ENCODE measurements at regions of chr19 and their contacts with region 1.

Region 1: GRCh38 chr19:49017666-49018351 is 918 bp upstream of the LHB start:
- DNase-seq: peak; percentile 89
- H3K4me3 ChIP-seq: peak overlapping the region; percentile 46 to 60
- H3K27ac ChIP-seq: no peak overlapping the region
- H3K4me1 ChIP-seq: peaks cover 0 to 35% of the 10 kb centered on the region in 2 experiments; a peak in 1 of 4 replicates
- H3K27me3 ChIP-seq: no peaks in the 10 kb centered on the region
- CTCF ChIP-seq: peak; percentile 57
- EP300 ChIP-seq: no peak
- RAD21 ChIP-seq: no peak

Region 2: DNA sequence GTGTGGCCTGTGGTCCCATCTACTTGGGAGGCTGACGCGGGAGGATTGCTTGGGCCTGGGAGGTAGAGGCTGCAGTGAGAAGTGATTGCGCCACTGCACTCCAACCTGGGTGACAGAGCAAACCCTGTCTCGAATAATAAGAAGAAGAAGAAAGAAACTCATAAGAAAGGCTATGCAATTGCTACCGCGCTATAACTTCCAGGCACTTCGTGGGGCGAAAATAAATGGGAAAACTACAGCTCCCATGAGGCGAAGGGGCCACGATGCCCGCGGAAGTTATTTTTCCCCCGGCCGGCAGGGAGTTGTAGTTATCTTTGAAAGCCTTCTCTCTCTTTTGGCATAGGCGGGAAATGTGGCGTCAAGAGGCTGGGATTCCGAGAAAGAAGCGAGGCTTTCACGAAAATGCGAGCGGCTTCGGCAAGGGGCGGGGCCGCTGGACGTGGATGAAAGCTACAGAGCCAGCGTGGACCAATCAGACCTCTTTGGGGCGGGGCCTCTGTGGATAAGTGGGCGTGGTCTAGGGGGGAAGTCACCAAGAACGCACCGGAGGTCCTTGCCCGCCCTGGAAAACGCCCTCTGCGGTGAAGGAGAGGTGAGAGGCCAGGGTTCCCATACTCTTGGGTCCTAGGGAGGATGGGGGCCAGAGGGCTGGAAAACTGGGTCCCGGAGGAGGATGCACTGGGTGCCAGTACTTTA is 117.9 kb before region 1 on chr19 and contains the start of gene NUCB1:
- CTCF ChIA-PET with region 1: no interaction called
- POLR2A ChIA-PET with region 1: no interaction called
- DNase-seq: peak; percentile 98
- H3K4me3 ChIP-seq: peak within 1 kb of the TSS; percentile 85
- H3K27ac ChIP-seq: peak within 1 kb of the TSS; percentile 70 to 90
- H3K4me1 ChIP-seq: peaks cover 0 to 9% of the 10 kb centered on the region in 2 experiments; a peak in 1 of 4 replicates
- H3K27me3 ChIP-seq: no peaks in the 10 kb centered on the region
- CTCF ChIP-seq: peak; percentile 32; the same call in 1 of the 2 replicates
- EP300 ChIP-seq: peak in 1 of 2 experiments; percentile 72; a peak in 1 of 4 replicates
- RAD21 ChIP-seq: 0 out of 2 replicates have a peak, but pooled peaks have one; percentile 12
- polyA plus RNA-seq, gene NUCB1: 259 and 397 TPM in 2 replicates

Region 3: DNA sequence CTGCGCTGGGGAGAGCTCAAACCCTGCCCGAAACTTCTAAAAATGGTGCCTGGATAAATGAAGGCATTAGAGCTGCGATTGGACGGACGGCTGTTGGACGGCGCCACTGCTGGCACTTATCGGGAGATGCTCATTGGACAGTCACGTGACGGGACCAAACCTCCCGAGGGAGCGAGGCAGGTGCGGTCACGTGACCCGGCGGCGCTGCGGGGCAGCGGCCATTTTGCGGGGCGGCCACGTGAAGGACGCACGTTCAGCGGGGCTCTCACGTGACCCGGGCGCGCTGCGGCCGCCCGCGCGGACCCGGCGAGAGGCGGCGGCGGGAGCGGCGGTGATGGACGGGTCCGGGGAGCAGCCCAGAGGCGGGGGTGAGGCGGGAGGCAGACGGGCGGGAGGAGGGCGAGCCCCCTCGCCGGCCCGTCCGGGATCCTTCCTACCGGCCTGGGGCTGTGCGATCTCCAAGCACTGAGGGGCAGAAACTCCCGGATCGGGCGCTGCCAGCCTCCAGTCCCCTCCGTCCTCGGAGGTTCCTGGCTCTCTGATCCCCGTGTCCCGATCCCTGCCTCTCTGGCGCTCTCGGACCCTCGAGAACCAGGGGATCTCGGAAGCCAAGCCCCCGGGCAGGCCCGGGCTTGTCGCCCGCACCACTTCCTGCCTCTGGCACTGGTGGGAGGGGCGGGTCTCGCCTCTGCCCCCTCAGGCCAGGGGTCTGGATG is 63.1 kb before region 1 on chr19 and contains the start of gene BAX:
- CTCF ChIA-PET with region 1: no interaction called
- POLR2A ChIA-PET with region 1: no interaction called
- DNase-seq: peak; percentile 99
- H3K4me3 ChIP-seq: peak within 1 kb of the TSS; percentile 76 to 80
- H3K27ac ChIP-seq: peak within 1 kb of the TSS; percentile 83 to 86
- H3K4me1 ChIP-seq: peaks cover 8 to 10% of the 10 kb centered on the region in 2 experiments; a peak in 2 of 4 replicates
- H3K27me3 ChIP-seq: no peaks in the 10 kb centered on the region
- CTCF ChIP-seq: no peak
- EP300 ChIP-seq: peak; percentile 13 to 20; a peak in 1 of 4 replicates
- RAD21 ChIP-seq: 0 out of 2 replicates have a peak, but pooled peaks have one; percentile 1
- polyA plus RNA-seq, gene BAX: 278 and 640 TPM in 2 replicates

Region 4: GRCh38 chr19:48999481-49000325 is 18.1 kb before region 1 on chr19:
- CTCF ChIA-PET with region 1: interaction called, 68 read pairs
- POLR2A ChIA-PET with region 1: no interaction called
- DNase-seq: peak; percentile 65
- H3K4me3 ChIP-seq: no peak overlapping the region; a peak in 1 of 4 replicates
- H3K27ac ChIP-seq: no peak overlapping the region
- H3K4me1 ChIP-seq: peaks cover 0 to 7% of the 10 kb centered on the region in 2 experiments; a peak in 1 of 4 replicates
- H3K27me3 ChIP-seq: no peaks in the 10 kb centered on the region
- CTCF ChIP-seq: peak; percentile 66
- EP300 ChIP-seq: no peak
- RAD21 ChIP-seq: peak; percentile 39

Region 5: GRCh38 chr19:49006926-49007325 is 10.9 kb before region 1 on chr19:
- CTCF ChIA-PET with region 1: interaction called, 68 read pairs
- POLR2A ChIA-PET with region 1: interaction called, 7 read pairs
- DNase-seq: no peak
- H3K4me3 ChIP-seq: no peak overlapping the region
- H3K27ac ChIP-seq: no peak overlapping the region
- H3K4me1 ChIP-seq: no peaks in the 10 kb centered on the region
- H3K27me3 ChIP-seq: no peaks in the 10 kb centered on the region
- CTCF ChIP-seq: no peak
- EP300 ChIP-seq: no peak
- RAD21 ChIP-seq: no peak

Region 6: GRCh38 chr19:49073514-49074378 is 55.9 kb after region 1 on chr19:
- CTCF ChIA-PET with region 1: interaction called, 11 read pairs
- POLR2A ChIA-PET with region 1: no interaction called
- DNase-seq: peak; percentile 50
- H3K4me3 ChIP-seq: no peak overlapping the region
- H3K27ac ChIP-seq: no peak overlapping the region
- H3K4me1 ChIP-seq: no peaks in the 10 kb centered on the region; a peak in 1 of 4 replicates
- H3K27me3 ChIP-seq: peaks cover 8% of the 10 kb centered on the region; the same call in 1 of the 2 replicates
- CTCF ChIP-seq: peak; percentile 49
- EP300 ChIP-seq: no peak
- RAD21 ChIP-seq: no peak; the same call in 1 of the 2 replicates

Measured in SK-N-SH (cell line).